ENCODE measurements at regions of chr5 and their contacts with region 1.

Region 1: DNA sequence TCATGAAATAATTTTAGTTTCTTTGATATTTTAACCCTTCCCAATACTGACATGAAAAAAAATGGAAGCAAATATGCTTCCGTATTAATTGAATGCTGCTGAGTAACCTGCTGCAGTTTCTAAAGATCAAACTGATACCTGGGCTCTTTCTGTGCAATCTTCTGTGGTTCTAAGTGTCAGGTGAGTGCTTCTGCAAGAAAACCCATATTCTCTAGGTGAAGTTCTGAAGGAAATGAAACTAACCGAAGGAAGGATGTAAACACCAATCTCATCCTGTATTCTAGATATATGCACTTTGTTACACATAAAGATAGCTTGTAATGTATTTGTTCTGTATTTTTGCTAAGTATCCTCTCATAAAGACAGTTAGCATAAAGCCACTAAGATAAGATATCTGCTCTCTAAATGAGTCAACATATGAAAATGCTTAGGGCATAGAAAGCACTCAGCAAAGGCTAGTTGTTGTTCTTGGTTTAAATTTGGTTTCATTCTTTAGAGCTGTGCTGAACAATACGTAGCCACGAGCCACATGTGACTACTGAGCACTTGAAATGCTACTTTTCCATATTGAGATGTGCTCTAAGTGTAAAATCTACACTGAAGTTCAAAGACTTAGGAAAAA is 52.0 kb downstream of the ITGA2 start:
- DNase-seq: peak in 5 of 9 donors; percentile 6 to 49 (median 27)
- ATAC-seq: peak; percentile 81
- H3K4me3 ChIP-seq: peak overlapping the region; percentile 24
- H3K4me3 Mint-ChIP-seq: peak overlapping the region; percentile 16 to 88 (median 74)
- H3K27ac ChIP-seq: no peak overlapping the region
- H3K27ac Mint-ChIP-seq: peak overlapping the region; percentile 12 to 92 (median 66)
- H3K4me1 ChIP-seq: peaks cover 7 to 12% of the 10 kb centered on the region in 2 donors
- H3K4me1 Mint-ChIP-seq: peaks cover 11 to 77% (median 24%) of the 10 kb centered on the region in 7 donors
- H3K27me3 ChIP-seq: no peaks in the 10 kb centered on the region
- H3K27me3 Mint-ChIP-seq: peaks cover 0 to 4% (median 0%) of the 10 kb centered on the region in 5 donors

Region 2: DNA sequence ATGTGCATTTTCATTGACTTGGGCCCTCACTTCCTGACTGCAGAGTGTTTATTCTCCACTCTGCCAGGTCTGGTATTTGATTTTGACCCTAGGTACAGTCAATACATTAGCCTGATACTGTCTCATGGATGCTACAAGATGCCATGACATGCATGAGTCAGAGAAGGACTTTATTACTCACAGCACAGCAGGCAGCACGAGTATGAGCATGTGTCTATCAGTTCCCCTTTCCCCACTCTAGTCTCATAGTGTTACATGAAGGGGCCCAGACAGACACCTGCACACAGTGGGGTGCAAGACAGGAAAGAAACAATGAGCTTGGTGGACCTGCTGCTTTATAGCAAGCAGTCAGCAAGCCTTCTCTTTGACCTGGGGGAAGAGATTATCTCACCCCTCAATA is 32.4 kb before region 1 on chr5:
- CTCF ChIA-PET with region 1: no interaction called
- POLR2A ChIA-PET with region 1: no interaction called
- intact Hi-C with region 1: loop called in 1 of 2 experiments (anchors 1 kb)
- DNase-seq: peak in 1 of 9 donors; percentile 45
- ATAC-seq: peak; percentile 59
- H3K4me3 ChIP-seq: no peak overlapping the region
- H3K4me3 Mint-ChIP-seq: peak overlapping the region in 1 of 10 donors; percentile 21
- H3K27ac ChIP-seq: no peak overlapping the region
- H3K27ac Mint-ChIP-seq: peak overlapping the region in 2 of 9 donors; percentile 23 to 76
- H3K4me1 ChIP-seq: peaks cover 0 to 9% of the 10 kb centered on the region in 2 donors
- H3K4me1 Mint-ChIP-seq: peaks cover 0 to 78% (median 23%) of the 10 kb centered on the region in 7 donors
- H3K27me3 ChIP-seq: no peaks in the 10 kb centered on the region
- H3K27me3 Mint-ChIP-seq: peaks cover 0 to 3% (median 0%) of the 10 kb centered on the region in 5 donors

Region 3: GRCh38 chr5:53089345-53089991 is 48.3 kb after region 1 on chr5:
- CTCF ChIA-PET with region 1: no interaction called
- POLR2A ChIA-PET with region 1: no interaction called
- intact Hi-C with region 1: loop called in 1 of 2 experiments (anchors 1 kb)
- DNase-seq: peak in 6 of 9 donors; percentile 29 to 60 (median 40)
- ATAC-seq: peak; percentile 65
- H3K4me3 ChIP-seq: no peak overlapping the region
- H3K4me3 Mint-ChIP-seq: peak overlapping the region in 7 of 10 donors; percentile 32 to 71 (median 47)
- H3K27ac ChIP-seq: no peak overlapping the region
- H3K27ac Mint-ChIP-seq: peak overlapping the region in 5 of 9 donors; percentile 25 to 76 (median 40)
- H3K4me1 ChIP-seq: peaks cover 0 to 16% of the 10 kb centered on the region in 2 donors
- H3K4me1 Mint-ChIP-seq: peaks cover 11 to 61% (median 19%) of the 10 kb centered on the region in 7 donors
- H3K27me3 ChIP-seq: no peaks in the 10 kb centered on the region
- H3K27me3 Mint-ChIP-seq: peaks cover 0 to 2% (median 0%) of the 10 kb centered on the region in 5 donors